IMR-90 (cell line): ENCODE measurements at regions of chr2 and their contacts with region 1.

Region 1: GRCh38 chr2:34831096-34831495 is 1232.0 kb upstream of the FAM98A start:
- DNase-seq: no peak
- ATAC-seq: no peak
- H3K4me3 ChIP-seq: no peak overlapping the region
- H3K27ac ChIP-seq: no peak overlapping the region
- H3K4me1 ChIP-seq: no peaks in the 10 kb centered on the region
- H3K27me3 ChIP-seq: no peaks in the 10 kb centered on the region
- CTCF ChIP-seq: no peak
- POLR2A ChIP-seq: no peak
- RAD21 ChIP-seq: no peak

Region 2: GRCh38 chr2:34936089-34936488 is 105.0 kb after region 1 on chr2:
- CTCF ChIA-PET with region 1: interaction called, 10 read pairs
- POLR2A ChIA-PET with region 1: no interaction called
- dilution Hi-C with region 1: no loop called
- in situ Hi-C with region 1: no loop called
- intact Hi-C with region 1: no loop called
- DNase-seq: no peak
- ATAC-seq: no peak
- H3K4me3 ChIP-seq: no peak overlapping the region
- H3K27ac ChIP-seq: no peak overlapping the region
- H3K4me1 ChIP-seq: no peaks in the 10 kb centered on the region
- H3K27me3 ChIP-seq: no peaks in the 10 kb centered on the region
- CTCF ChIP-seq: no peak
- POLR2A ChIP-seq: no peak
- RAD21 ChIP-seq: no peak